OCI-LY7 (cell line): ENCODE measurements at regions of chr16 and their contacts with region 1.

Region 1: GRCh38 chr16:22190776-22191531 is 15.1 kb upstream of the EEF2K start:
- DNase-seq: peak; percentile 95
- H3K4me3 ChIP-seq: peak overlapping the region; percentile 78
- H3K27ac ChIP-seq: peak overlapping the region; percentile 40
- H3K4me1 ChIP-seq: peaks cover 39% of the 10 kb centered on the region
- CTCF ChIP-seq: no peak

Region 2: GRCh38 chr16:22001591-22001990 is 189.4 kb before region 1 on chr16:
- CTCF ChIA-PET with region 1: interaction called, 3 read pairs
- POLR2A ChIA-PET with region 1: no interaction called
- intact Hi-C with region 1: loop called (anchors 1 kb)
- DNase-seq: no peak
- H3K4me3 ChIP-seq: no peak overlapping the region
- H3K27ac ChIP-seq: no peak overlapping the region
- H3K4me1 ChIP-seq: peaks cover 6% of the 10 kb centered on the region
- CTCF ChIP-seq: no peak

Region 3: DNA sequence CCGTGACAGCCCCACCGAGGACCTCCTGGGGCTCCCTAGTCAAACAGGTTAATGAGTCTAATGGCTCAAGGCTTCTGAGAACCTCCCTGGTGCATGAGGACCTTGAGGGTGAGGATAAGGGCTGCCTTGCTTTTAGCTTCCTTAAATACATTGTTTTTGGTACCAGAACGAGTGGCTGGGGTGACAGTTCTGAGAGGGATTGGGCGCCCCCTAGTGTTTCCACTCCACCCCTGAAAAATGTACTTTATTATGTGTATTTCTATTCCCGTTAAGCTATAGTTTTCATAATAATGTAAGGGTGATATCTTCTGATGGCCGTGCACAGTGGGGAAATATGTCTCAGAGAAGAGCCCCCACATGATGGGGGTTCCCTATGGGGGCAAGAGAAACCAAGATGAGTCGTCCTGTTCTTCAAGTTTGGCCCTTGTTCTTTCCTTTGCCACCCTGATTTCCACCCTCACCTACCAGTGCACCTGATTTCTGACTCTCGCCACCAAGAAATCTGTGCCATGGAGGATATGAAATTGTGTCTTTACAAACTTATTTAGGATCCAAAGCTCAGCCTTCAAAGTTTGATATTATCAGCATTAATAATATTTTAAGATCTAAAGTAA is 113.1 kb before region 1 on chr16:
- CTCF ChIA-PET with region 1: interaction called, 4 read pairs
- POLR2A ChIA-PET with region 1: interaction called, 3 read pairs
- intact Hi-C with region 1: loop called (anchors 1 kb)
- DNase-seq: peak; percentile 74
- H3K4me3 ChIP-seq: no peak overlapping the region
- H3K27ac ChIP-seq: no peak overlapping the region
- H3K4me1 ChIP-seq: peaks cover 9% of the 10 kb centered on the region
- CTCF ChIP-seq: peak; percentile 98

Region 4: GRCh38 chr16:22126103-22126502 is 64.9 kb before region 1 on chr16:
- CTCF ChIA-PET with region 1: no interaction called
- POLR2A ChIA-PET with region 1: no interaction called
- intact Hi-C with region 1: no loop called
- DNase-seq: no peak
- H3K4me3 ChIP-seq: no peak overlapping the region
- H3K27ac ChIP-seq: no peak overlapping the region
- H3K4me1 ChIP-seq: no peaks in the 10 kb centered on the region
- CTCF ChIP-seq: no peak

Region 5: DNA sequence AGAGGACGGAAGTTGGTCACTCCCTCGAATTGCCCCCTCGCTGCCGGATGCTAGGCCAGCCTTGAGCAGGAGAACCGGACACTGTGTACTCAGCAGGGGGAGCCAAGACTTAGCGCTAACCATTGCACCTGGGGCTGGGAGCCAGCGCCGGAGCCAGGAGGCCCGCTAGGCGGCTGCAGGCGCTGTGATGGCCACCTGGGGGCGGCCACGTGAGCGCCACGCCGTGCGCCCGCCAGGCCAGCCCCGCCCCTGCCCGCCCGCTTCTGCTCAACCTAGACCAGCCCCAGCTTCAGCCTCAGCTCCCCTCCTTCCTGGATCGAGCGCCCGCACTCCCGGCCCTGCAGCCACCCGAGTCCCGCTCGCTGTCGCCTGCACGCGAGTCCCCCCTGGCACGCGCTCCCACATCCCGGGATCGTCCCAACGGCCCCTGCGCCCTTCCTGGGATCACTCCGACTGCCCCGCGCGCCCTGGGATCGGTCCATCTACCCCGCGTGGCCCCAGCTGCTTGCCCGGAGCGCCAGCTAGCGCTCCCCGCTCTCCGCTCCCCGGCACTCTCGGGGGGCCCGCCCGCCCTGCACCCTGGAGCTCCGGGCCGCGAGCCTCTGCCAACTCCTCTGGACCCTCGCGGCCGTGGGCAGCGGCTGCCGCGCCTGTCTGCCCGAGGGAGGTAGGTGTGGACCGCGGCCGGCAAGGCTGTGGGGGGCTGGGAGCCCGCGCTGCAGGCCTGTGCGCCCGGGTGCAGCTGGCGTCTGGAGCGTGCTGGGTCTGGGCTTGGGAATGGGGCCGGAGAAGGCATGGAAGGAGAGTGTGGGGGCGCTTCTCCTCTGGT is 15.3 kb after region 1 on chr16 and contains the start of gene EEF2K:
- CTCF ChIA-PET with region 1: no interaction called
- POLR2A ChIA-PET with region 1: interaction called, 6 read pairs
- intact Hi-C with region 1: loop called (anchors 1 kb)
- DNase-seq: peak; percentile 94
- H3K4me3 ChIP-seq: peak within 1 kb of the TSS; percentile 94
- H3K27ac ChIP-seq: peak within 1 kb of the TSS; percentile 84
- H3K4me1 ChIP-seq: peaks cover 56% of the 10 kb centered on the region
- CTCF ChIP-seq: peak; percentile 76
- total RNA-seq, gene EEF2K: 17.6 and 23.8 TPM in 2 replicates

Region 6: DNA sequence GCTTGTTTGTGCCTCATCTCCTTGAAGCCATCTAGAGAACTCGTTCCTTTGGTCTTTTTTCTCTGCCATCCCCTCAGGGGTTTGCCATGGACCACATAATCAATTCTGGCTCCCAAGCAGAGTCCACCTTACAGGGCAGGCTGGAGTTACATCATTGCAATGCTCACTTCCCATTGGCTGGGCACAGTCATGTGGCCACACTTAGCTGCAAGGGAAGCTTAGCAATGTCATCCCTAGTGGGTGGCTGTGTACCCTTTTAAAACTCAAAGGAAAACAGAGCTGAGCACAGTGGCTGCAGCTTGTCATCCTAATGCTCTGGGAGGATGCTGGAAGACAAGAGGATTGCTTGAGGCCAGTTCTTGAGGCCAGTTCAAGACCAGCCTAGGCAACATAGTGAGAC is 64.4 kb after region 1 on chr16:
- CTCF ChIA-PET with region 1: no interaction called
- POLR2A ChIA-PET with region 1: no interaction called
- intact Hi-C with region 1: no loop called
- DNase-seq: peak; percentile 7
- H3K4me3 ChIP-seq: no peak overlapping the region
- H3K27ac ChIP-seq: no peak overlapping the region
- H3K4me1 ChIP-seq: no peaks in the 10 kb centered on the region
- CTCF ChIP-seq: no peak

Region 7: GRCh38 chr16:22353191-22353919 is 162.4 kb after region 1 on chr16:
- CTCF ChIA-PET with region 1: no interaction called
- POLR2A ChIA-PET with region 1: no interaction called
- intact Hi-C with region 1: no loop called
- DNase-seq: no peak
- H3K4me3 ChIP-seq: no peak overlapping the region
- H3K27ac ChIP-seq: no peak overlapping the region
- H3K4me1 ChIP-seq: peaks cover 14% of the 10 kb centered on the region
- CTCF ChIP-seq: no peak

Region 8: GRCh38 chr16:22374311-22375116 is 183.6 kb after region 1 on chr16 and contains the start of gene CDR2:
- CTCF ChIA-PET with region 1: no interaction called
- POLR2A ChIA-PET with region 1: interaction called, 3 read pairs
- intact Hi-C with region 1: loop called (anchors 5 kb)
- DNase-seq: peak; percentile 99
- H3K4me3 ChIP-seq: peak within 1 kb of the TSS; percentile 75
- H3K27ac ChIP-seq: peak within 1 kb of the TSS; percentile 67
- H3K4me1 ChIP-seq: peaks cover 41% of the 10 kb centered on the region
- CTCF ChIP-seq: no peak
- total RNA-seq, gene CDR2: 33.0 and 62.5 TPM in 2 replicates